OCI-LY7 (cell line): ENCODE measurements at regions of chr4 and their contacts with region 1.

Region 1: GRCh38 chr4:37686373-37687193 is at the start of gene RELL1:
- DNase-seq: peak; percentile 97
- H3K4me3 ChIP-seq: peak within 1 kb of the TSS; percentile 78
- H3K27ac ChIP-seq: peak within 1 kb of the TSS; percentile 75
- H3K4me1 ChIP-seq: peaks cover 40% of the 10 kb centered on the region
- CTCF ChIP-seq: no peak
- total RNA-seq, gene RELL1: 60.7 and 62.3 TPM in 2 replicates

Region 2: DNA sequence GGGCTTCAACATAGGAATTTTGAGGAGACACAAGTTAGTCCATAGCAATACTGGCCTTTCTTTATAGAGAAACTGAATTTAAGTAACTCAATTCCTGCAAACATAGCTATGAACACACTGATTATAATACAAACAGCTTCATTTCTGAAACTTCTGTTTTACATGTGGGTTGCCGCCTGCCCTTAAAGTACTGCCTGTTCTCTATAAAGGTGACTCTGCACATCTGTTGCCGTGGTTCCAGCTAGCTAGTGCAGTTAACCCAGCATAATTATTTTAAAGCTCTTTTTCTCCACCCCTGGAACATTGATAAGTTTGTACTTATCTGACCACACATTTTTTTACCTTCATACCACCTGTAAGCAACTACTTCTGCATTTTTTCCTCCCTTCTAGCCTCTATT is 264.5 kb before region 1 on chr4:
- CTCF ChIA-PET with region 1: no interaction called
- POLR2A ChIA-PET with region 1: no interaction called
- intact Hi-C with region 1: no loop called
- DNase-seq: no peak
- H3K4me3 ChIP-seq: no peak overlapping the region
- H3K27ac ChIP-seq: no peak overlapping the region
- H3K4me1 ChIP-seq: no peaks in the 10 kb centered on the region
- CTCF ChIP-seq: no peak

Region 3: GRCh38 chr4:37648096-37648817 is 38.3 kb before region 1 on chr4:
- CTCF ChIA-PET with region 1: interaction called, 3 read pairs
- POLR2A ChIA-PET with region 1: interaction called, 6 read pairs
- intact Hi-C with region 1: loop called (anchors 1 kb)
- DNase-seq: no peak
- H3K4me3 ChIP-seq: no peak overlapping the region
- H3K27ac ChIP-seq: no peak overlapping the region
- H3K4me1 ChIP-seq: peaks cover 27% of the 10 kb centered on the region
- CTCF ChIP-seq: no peak

Region 4: DNA sequence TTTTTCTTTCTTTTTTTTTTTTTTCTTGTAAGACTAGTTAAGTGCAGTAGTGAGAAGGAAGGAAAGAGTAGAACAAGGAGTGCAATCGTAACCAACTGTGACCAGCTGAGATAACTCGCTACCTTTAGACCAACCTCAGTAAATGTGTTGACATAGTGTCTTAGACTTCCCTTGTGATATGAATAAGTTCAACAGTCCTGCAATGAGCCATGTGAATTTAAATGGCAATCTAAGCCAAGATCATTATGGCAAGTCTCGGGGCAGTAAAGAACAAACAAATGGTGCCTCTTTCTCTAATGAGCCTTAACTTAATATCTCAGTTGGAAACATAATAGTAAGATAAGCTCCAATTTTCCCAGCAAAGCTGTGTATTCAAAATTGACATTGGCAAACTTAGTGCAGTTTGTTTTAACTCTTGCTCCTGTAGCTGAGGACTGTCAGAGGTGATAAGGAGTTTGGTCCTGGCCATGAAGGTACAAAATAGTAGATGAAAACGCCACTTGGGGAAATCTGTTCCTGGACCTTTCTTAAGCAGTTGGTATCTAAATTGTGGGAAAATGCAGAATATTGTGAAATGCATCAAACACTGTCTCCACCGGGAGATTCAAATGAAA is 13.4 kb after region 1 on chr4:
- CTCF ChIA-PET with region 1: interaction called, 3 read pairs
- POLR2A ChIA-PET with region 1: interaction called, 11 read pairs
- intact Hi-C with region 1: no loop called
- DNase-seq: no peak
- H3K4me3 ChIP-seq: no peak overlapping the region
- H3K27ac ChIP-seq: no peak overlapping the region
- H3K4me1 ChIP-seq: no peaks in the 10 kb centered on the region
- CTCF ChIP-seq: no peak

Region 5: GRCh38 chr4:37826295-37827029 is 139.9 kb after region 1 on chr4 and contains the start of gene PGM2:
- CTCF ChIA-PET with region 1: no interaction called
- POLR2A ChIA-PET with region 1: no interaction called
- intact Hi-C with region 1: loop called (anchors 1 kb)
- DNase-seq: peak; percentile 92
- H3K4me3 ChIP-seq: peak within 1 kb of the TSS; percentile 91
- H3K27ac ChIP-seq: peak within 1 kb of the TSS; percentile 60
- H3K4me1 ChIP-seq: peaks cover 30% of the 10 kb centered on the region
- CTCF ChIP-seq: 0 out of 2 replicates have a peak, but pooled peaks have one; percentile 21
- total RNA-seq, gene PGM2: 52.7 and 67.4 TPM in 2 replicates

Region 6: DNA sequence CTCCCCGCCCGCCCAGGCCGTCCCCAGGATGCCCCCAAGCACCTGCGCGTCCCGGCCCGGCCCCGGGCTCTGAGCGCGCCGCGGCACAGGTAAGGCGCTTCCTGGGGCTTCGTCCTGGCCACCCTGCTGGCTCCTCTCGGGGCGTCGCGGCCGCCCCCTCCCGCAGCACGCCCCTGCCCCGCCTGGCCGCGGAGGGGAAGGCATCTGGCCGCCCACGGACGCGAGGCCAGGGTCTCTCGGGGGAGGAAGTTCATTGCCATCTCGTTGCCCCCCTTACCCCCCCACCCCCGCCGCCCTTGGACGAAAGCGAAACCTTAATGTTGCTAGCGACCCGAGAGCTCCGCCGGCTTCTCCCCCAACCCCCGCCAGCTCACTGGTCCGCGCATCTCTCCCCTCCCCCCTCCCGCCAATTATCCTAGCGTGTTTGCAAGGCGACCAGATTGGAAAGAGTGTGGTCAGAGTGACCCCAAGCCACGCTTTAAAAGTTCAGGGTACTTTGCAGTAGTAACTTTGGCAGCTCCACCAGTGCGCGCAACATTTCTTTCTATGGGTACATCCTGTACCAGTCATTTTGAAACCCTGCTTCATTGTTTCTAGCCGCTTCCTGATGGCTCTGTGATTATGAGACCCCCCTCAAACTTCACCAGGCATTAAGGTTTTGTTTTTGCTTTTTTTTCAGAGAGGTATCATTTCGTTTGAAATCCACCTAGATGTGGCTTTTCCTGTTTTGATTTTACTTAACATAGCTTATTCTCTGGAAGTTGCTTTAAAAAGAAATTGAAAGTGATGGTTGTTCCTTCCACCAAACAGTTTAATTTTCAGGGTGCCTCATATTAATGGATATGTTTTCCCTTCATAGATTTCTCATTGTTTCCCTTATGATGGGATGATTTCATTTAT is 204.9 kb after region 1 on chr4:
- CTCF ChIA-PET with region 1: no interaction called
- POLR2A ChIA-PET with region 1: interaction called, 3 read pairs
- intact Hi-C with region 1: loop called (anchors 2 kb)
- DNase-seq: peak; percentile 78
- H3K4me3 ChIP-seq: peak overlapping the region; percentile 76
- H3K27ac ChIP-seq: peak overlapping the region; percentile 78
- H3K4me1 ChIP-seq: peaks cover 33% of the 10 kb centered on the region
- CTCF ChIP-seq: peak; percentile 37; the same call in 1 of the 2 replicates

Region 7: GRCh38 chr4:38078590-38079421 is 392.2 kb after region 1 on chr4:
- CTCF ChIA-PET with region 1: no interaction called
- POLR2A ChIA-PET with region 1: no interaction called
- intact Hi-C with region 1: no loop called
- DNase-seq: no peak
- H3K4me3 ChIP-seq: no peak overlapping the region
- H3K27ac ChIP-seq: no peak overlapping the region
- H3K4me1 ChIP-seq: no peaks in the 10 kb centered on the region
- CTCF ChIP-seq: no peak